ENCODE measurements at regions of chr6 and their contacts with region 1.

Region 1: GRCh38 chr6:133160536-133160935 is 80.6 kb upstream of the EYA4 start:
- DNase-seq: no peak
- ATAC-seq: no peak
- H3K4me3 ChIP-seq: no peak overlapping the region
- H3K27ac ChIP-seq: no peak overlapping the region
- H3K4me1 ChIP-seq: no peaks in the 10 kb centered on the region
- H3K27me3 ChIP-seq: no peaks in the 10 kb centered on the region
- CTCF ChIP-seq: no peak

Region 2: GRCh38 chr6:132768051-132768517 is 392.5 kb before region 1 on chr6:
- intact Hi-C with region 1: no loop called
- DNase-seq: peak; percentile 7 to 25
- ATAC-seq: peak; percentile 76 to 88 (median 84)
- H3K4me3 ChIP-seq: no peak overlapping the region
- H3K27ac ChIP-seq: no peak overlapping the region
- H3K4me1 ChIP-seq: peaks cover 0 to 17% (median 0%) of the 10 kb centered on the region in 9 donors
- H3K27me3 ChIP-seq: no peaks in the 10 kb centered on the region
- CTCF ChIP-seq: peak in 7 of 9 donors; percentile 41 to 69 (median 57)

Region 3: GRCh38 chr6:135096403-135097135 is 1936.0 kb after region 1 on chr6:
- intact Hi-C with region 1: loop called in 1 of 10 experiments (anchors 5 kb)
- DNase-seq: no peak
- ATAC-seq: no peak
- H3K4me3 ChIP-seq: no peak overlapping the region
- H3K27ac ChIP-seq: no peak overlapping the region
- H3K4me1 ChIP-seq: no peaks in the 10 kb centered on the region
- H3K27me3 ChIP-seq: peaks cover 0 to 6% (median 0%) of the 10 kb centered on the region in 7 donors
- CTCF ChIP-seq: no peak